ENCODE measurements at regions of chr9 and their contacts with region 1.

Region 1: GRCh38 chr9:114681594-114682332 is at the start of gene TEX48:
- DNase-seq: peak; percentile 19
- ATAC-seq: peak; percentile 99
- H3K4me3 ChIP-seq: no peak within 1 kb of the TSS
- H3K27ac ChIP-seq: no peak within 1 kb of the TSS
- H3K4me1 ChIP-seq: no peaks in the 10 kb centered on the region
- H3K27me3 ChIP-seq: peaks cover 0 to 9% of the 10 kb centered on the region in 2 experiments; a peak in 2 of 4 replicates
- CTCF ChIP-seq: peak; percentile 83 to 86 (median 85)
- EP300 ChIP-seq: no peak
- POLR2A ChIP-seq: no peak
- RAD21 ChIP-seq: peak; percentile 88
- polyA plus RNA-seq, gene TEX48: not detected

Region 2: DNA sequence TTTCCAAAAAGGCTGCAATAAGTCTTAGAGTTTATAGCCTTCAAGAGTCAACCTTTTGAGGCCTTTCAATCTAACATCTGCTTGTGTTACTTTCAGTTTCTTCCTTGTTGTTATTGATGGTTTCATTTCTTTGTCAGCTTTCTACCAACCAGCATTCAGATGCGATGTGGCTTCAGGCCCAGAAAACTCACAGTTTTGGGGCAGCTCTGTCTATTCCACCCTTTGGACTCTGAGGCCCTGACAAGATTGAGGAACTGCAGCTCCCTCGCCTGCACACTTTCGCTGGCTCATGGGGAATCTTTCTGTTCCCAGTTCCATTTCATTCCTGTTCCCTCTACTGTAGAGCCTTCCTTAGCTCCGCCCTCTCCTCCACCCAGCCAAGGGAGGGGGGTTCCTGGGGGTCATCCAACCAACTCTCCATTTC is 163.2 kb before region 1 on chr9:
- CTCF ChIA-PET with region 1: no interaction called
- POLR2A ChIA-PET with region 1: no interaction called
- RAD21 ChIA-PET with region 1: no interaction called
- SMC1A ChIA-PET with region 1: no interaction called
- in situ Hi-C with region 1: no loop called
- intact Hi-C with region 1: no loop called
- DNase-seq: peak; percentile 7
- ATAC-seq: peak; percentile 83
- H3K4me3 ChIP-seq: no peak overlapping the region
- H3K27ac ChIP-seq: peak overlapping the region; percentile 19; the same call in 1 of the 2 replicates
- H3K4me1 ChIP-seq: peaks cover 7% of the 10 kb centered on the region
- H3K27me3 ChIP-seq: peaks cover 0 to 3% of the 10 kb centered on the region in 2 experiments; a peak in 2 of 4 replicates
- CTCF ChIP-seq: no peak
- EP300 ChIP-seq: no peak
- POLR2A ChIP-seq: no peak
- RAD21 ChIP-seq: no peak

Region 3: DNA sequence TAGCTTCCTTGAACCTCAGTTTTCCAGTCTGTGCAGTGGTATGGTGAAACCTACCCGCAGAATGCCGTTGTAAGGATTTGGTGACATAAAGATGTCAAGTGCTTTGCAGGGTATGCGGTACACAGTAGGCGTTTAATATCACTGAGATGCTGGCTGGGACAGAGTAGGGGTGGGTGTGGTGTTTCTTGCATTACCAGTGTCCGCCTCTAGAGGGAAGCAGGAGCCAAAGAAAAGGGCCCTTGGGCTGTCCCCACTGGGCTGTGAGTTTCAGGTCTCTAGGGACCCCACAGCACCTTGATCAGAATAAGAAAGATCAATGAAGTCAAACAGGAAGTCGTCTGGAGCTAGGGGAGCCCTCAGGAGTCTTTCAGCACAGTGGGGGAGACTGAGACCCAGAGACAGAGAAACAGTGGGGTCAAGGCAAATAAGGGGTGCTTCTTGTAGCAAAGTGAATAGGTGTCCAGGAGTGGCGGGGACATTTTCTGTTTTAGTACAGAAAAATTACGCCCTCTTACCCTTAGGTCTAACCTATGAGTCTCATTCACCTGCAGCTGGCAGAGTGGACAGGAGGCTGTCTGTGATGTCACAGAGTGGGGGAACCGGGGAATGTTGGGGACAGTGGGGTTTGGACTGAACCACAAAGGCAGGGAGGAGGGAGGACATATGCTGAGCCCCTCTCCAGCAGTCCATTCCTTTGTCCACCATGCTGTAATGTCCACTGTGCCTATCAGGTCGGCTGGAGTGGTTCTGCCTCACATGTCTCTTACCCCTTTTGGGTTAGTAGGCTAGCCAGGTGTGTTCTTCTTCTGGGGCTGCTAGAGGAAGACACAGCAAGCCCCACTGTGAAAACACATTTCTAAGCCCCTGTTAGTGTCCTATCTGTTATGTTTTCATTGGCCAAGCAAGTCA is 19.4 kb before region 1 on chr9:
- CTCF ChIA-PET with region 1: interaction called, 135 read pairs
- POLR2A ChIA-PET with region 1: no interaction called
- RAD21 ChIA-PET with region 1: interaction called, 7 read pairs
- SMC1A ChIA-PET with region 1: interaction called, 9 read pairs
- in situ Hi-C with region 1: no loop called
- intact Hi-C with region 1: no loop called
- DNase-seq: no peak
- ATAC-seq: peak; percentile 96
- H3K4me3 ChIP-seq: no peak overlapping the region
- H3K27ac ChIP-seq: no peak overlapping the region
- H3K4me1 ChIP-seq: no peaks in the 10 kb centered on the region
- H3K27me3 ChIP-seq: no peaks in the 10 kb centered on the region
- CTCF ChIP-seq: peak; percentile 75 to 90 (median 81)
- EP300 ChIP-seq: no peak
- POLR2A ChIP-seq: no peak
- RAD21 ChIP-seq: peak; percentile 69

Region 4: DNA sequence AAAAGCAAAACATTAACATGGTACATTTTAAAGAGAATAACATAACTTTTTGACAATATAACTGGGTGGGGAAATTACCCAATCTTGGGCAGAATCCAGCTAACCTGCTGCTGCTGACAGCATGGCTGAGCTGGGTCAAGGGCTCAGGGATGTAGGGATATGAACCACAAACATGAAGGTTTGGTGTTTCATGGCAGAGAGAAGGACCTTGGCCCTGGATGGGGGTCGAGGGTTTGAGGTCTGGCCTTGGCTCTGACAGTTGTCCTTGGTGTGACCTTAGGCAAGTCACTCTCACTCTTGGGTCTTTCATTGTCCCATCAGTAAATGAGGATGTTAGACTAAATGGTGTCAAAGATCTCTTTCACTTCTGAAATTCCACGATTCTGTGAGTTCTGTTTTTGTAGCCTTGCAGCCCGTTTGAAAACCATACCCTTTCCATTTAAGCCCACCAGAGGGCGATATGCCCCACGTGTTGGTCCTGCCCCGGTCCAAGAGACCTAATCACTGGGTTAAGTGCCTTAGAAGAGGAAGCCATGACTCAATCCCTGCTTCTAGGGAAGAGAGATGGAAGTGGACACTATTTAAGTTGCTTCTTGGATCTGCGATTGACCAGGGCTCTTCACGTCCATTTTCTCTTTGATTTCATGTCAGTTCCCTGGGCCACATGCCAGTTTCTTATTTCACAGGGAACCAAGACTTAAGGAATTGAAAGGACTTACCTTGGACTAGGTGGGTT is 57.0 kb after region 1 on chr9:
- CTCF ChIA-PET with region 1: interaction called, 20 read pairs
- POLR2A ChIA-PET with region 1: no interaction called
- RAD21 ChIA-PET with region 1: interaction called, 15 read pairs
- SMC1A ChIA-PET with region 1: interaction called, 12 read pairs
- in situ Hi-C with region 1: no loop called
- intact Hi-C with region 1: loop called (anchors 1 kb)
- DNase-seq: peak; percentile 24
- ATAC-seq: peak; percentile 95
- H3K4me3 ChIP-seq: no peak overlapping the region
- H3K27ac ChIP-seq: no peak overlapping the region
- H3K4me1 ChIP-seq: no peaks in the 10 kb centered on the region
- H3K27me3 ChIP-seq: peaks cover 1 to 3% of the 10 kb centered on the region in 2 experiments; a peak in 2 of 4 replicates
- CTCF ChIP-seq: peak; percentile 76 to 88 (median 82)
- EP300 ChIP-seq: no peak
- POLR2A ChIP-seq: no peak
- RAD21 ChIP-seq: peak; percentile 98

Region 5: DNA sequence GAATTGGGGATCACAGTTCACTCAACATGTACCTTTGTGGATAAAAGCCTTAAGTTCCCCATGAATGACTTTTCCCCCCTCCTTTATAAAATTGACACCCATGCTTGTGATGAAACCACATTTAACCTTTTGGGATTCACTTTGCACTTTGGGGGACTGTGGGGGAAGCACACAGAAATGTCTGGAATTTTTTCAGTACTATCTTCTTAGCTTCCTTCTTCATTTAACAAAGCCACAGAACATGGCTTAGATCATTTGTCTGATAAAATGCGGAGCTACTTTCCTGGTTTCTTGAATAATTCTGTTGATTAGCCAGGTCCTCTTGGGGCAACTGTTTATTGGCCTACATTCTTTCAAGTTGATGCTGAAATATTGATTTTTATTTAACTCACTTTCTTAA is 94.2 kb after region 1 on chr9:
- CTCF ChIA-PET with region 1: no interaction called
- POLR2A ChIA-PET with region 1: no interaction called
- RAD21 ChIA-PET with region 1: no interaction called
- SMC1A ChIA-PET with region 1: no interaction called
- in situ Hi-C with region 1: no loop called
- intact Hi-C with region 1: no loop called
- DNase-seq: no peak
- ATAC-seq: no peak
- H3K4me3 ChIP-seq: no peak overlapping the region
- H3K27ac ChIP-seq: no peak overlapping the region
- H3K4me1 ChIP-seq: no peaks in the 10 kb centered on the region
- H3K27me3 ChIP-seq: peaks cover 0 to 2% of the 10 kb centered on the region in 2 experiments; a peak in 1 of 4 replicates
- CTCF ChIP-seq: no peak
- EP300 ChIP-seq: no peak
- POLR2A ChIP-seq: no peak
- RAD21 ChIP-seq: no peak

Region 6: GRCh38 chr9:114914139-114914538 is 232.4 kb after region 1 on chr9:
- CTCF ChIA-PET with region 1: interaction called, 36 read pairs
- POLR2A ChIA-PET with region 1: no interaction called
- RAD21 ChIA-PET with region 1: interaction called, 3 read pairs
- SMC1A ChIA-PET with region 1: interaction called, 9 read pairs
- in situ Hi-C with region 1: loop called (anchors 5 kb)
- intact Hi-C with region 1: no loop called
- DNase-seq: no peak
- ATAC-seq: peak; percentile 57; the same call in 2 of the 3 replicates
- H3K4me3 ChIP-seq: no peak overlapping the region
- H3K27ac ChIP-seq: no peak overlapping the region
- H3K4me1 ChIP-seq: peaks cover 7% of the 10 kb centered on the region; the same call in 1 of the 2 replicates
- H3K27me3 ChIP-seq: 0 out of 4 replicates have a peak, but pooled peaks cover 1 to 4% of the 10 kb centered on the region in 2 experiments
- CTCF ChIP-seq: peak; percentile 13 to 33 (median 18); a peak in 1 of 6 replicates
- EP300 ChIP-seq: no peak
- POLR2A ChIP-seq: no peak
- RAD21 ChIP-seq: peak; percentile 19; the same call in 1 of the 2 replicates

Region 7: DNA sequence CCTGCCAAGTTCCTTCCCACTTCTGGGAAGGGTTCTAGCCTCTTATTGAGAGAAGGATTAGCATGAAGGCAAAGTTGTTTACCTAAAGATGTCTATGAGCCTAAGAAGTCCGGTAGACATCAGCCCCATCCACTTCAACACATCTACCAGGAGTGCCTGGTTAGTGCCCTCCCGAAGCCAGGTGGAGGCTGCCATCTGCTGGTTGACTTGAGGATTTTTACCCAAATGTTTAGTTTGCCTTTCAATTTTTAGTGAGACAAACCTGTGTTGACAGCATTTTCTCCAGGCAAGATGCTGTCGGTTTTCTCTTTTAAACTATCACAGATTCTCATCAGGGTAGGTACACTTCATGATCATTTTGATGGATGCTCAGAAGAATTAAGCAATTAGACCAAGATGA is 332.2 kb after region 1 on chr9:
- CTCF ChIA-PET with region 1: interaction called, 46 read pairs
- POLR2A ChIA-PET with region 1: no interaction called
- RAD21 ChIA-PET with region 1: interaction called, 26 read pairs
- SMC1A ChIA-PET with region 1: interaction called, 41 read pairs
- in situ Hi-C with region 1: loop called (anchors 5 kb)
- intact Hi-C with region 1: loop called (anchors 1 kb)
- DNase-seq: no peak
- ATAC-seq: peak; percentile 90
- H3K4me3 ChIP-seq: no peak overlapping the region
- H3K27ac ChIP-seq: no peak overlapping the region
- H3K4me1 ChIP-seq: no peaks in the 10 kb centered on the region
- H3K27me3 ChIP-seq: peaks cover 0 to 2% of the 10 kb centered on the region in 2 experiments; a peak in 3 of 4 replicates
- CTCF ChIP-seq: peak; percentile 63 to 86 (median 68)
- EP300 ChIP-seq: no peak
- POLR2A ChIP-seq: no peak
- RAD21 ChIP-seq: peak; percentile 98

Measured in GM12878 (cell line).